GM12878 (cell line): ENCODE measurements at regions of chr18 and their contacts with region 1.

Region 1: DNA sequence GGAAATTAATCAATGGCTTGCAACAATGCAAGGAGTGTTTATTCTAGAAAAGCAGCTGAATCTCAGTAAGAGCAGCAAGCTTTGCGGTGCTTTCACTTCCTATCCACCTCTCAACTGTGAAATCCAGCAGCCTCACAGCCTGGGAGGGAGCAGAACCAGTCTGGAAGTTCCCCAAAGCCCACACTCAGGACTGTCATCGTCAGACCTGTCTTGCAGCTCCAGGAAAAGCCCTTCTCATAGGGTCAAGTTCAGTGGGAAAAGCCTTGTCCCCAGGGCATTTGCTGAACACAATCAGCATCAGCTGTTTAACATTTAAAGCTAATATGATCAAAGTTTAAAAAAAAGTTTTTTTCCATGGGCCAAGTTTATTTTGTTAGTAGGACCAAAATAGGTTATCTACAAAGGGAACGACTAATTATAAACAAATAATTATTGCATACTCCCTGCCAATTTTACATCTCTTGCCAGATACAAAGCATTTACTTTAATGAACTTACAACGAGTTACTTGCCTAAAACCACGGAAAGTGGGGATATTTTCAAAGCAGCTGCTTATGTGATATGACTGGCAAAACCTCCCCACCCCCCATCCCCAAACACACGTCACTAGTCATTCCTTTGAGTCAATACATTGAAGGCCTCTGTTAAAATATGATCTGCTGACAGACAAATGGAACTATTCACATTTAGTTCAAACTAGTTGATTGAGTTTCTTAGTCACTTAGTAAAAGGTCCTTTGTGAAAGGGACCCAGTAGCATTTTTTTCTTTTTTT is 36.8 kb downstream of the PARD6G start:
- DNase-seq: no peak
- ATAC-seq: peak; percentile 85
- H3K4me3 ChIP-seq: no peak overlapping the region
- H3K27ac ChIP-seq: no peak overlapping the region
- H3K4me1 ChIP-seq: peaks cover 13% of the 10 kb centered on the region; the same call in 1 of the 2 replicates
- H3K27me3 ChIP-seq: no peaks in the 10 kb centered on the region
- CTCF ChIP-seq: no peak
- EP300 ChIP-seq: peak; percentile 13 to 61; a peak in 1 of 4 replicates
- POLR2A ChIP-seq: no peak
- RAD21 ChIP-seq: no peak

Region 2: GRCh38 chr18:80194874-80195570 is 15.5 kb before region 1 on chr18:
- CTCF ChIA-PET with region 1: interaction called, 21 read pairs
- POLR2A ChIA-PET with region 1: interaction called, 4 read pairs
- RAD21 ChIA-PET with region 1: interaction called, 7 read pairs
- SMC1A ChIA-PET with region 1: interaction called, 16 read pairs
- in situ Hi-C with region 1: no loop called
- intact Hi-C with region 1: no loop called
- DNase-seq: peak; percentile 48
- ATAC-seq: peak; percentile 89
- H3K4me3 ChIP-seq: no peak overlapping the region
- H3K27ac ChIP-seq: no peak overlapping the region
- H3K4me1 ChIP-seq: no peaks in the 10 kb centered on the region
- H3K27me3 ChIP-seq: peaks cover 0 to 2% of the 10 kb centered on the region in 2 experiments; a peak in 1 of 4 replicates
- CTCF ChIP-seq: no peak
- EP300 ChIP-seq: no peak
- POLR2A ChIP-seq: no peak
- RAD21 ChIP-seq: no peak

Region 3: GRCh38 chr18:80200171-80200931 is 10.1 kb before region 1 on chr18:
- CTCF ChIA-PET with region 1: interaction called, 21 read pairs
- POLR2A ChIA-PET with region 1: interaction called, 10 read pairs
- RAD21 ChIA-PET with region 1: interaction called, 7 read pairs
- SMC1A ChIA-PET with region 1: interaction called, 16 read pairs
- in situ Hi-C with region 1: no loop called
- intact Hi-C with region 1: no loop called
- DNase-seq: no peak
- ATAC-seq: no peak
- H3K4me3 ChIP-seq: no peak overlapping the region
- H3K27ac ChIP-seq: no peak overlapping the region
- H3K4me1 ChIP-seq: peaks cover 27% of the 10 kb centered on the region
- H3K27me3 ChIP-seq: no peaks in the 10 kb centered on the region
- CTCF ChIP-seq: peak in 1 of 3 experiments; percentile 41; a peak in 1 of 6 replicates
- EP300 ChIP-seq: no peak
- POLR2A ChIP-seq: no peak
- RAD21 ChIP-seq: peak; percentile 63

Region 4: GRCh38 chr18:80223581-80224148 is 13.2 kb after region 1 on chr18:
- CTCF ChIA-PET with region 1: interaction called, 7 read pairs
- POLR2A ChIA-PET with region 1: interaction called, 4 read pairs
- RAD21 ChIA-PET with region 1: interaction called, 6 read pairs
- SMC1A ChIA-PET with region 1: interaction called, 14 read pairs
- in situ Hi-C with region 1: no loop called
- intact Hi-C with region 1: no loop called
- DNase-seq: no peak
- ATAC-seq: no peak
- H3K4me3 ChIP-seq: no peak overlapping the region
- H3K27ac ChIP-seq: no peak overlapping the region
- H3K4me1 ChIP-seq: no peaks in the 10 kb centered on the region
- H3K27me3 ChIP-seq: peaks cover 0 to 6% of the 10 kb centered on the region in 2 experiments; a peak in 1 of 4 replicates
- CTCF ChIP-seq: no peak
- EP300 ChIP-seq: no peak
- POLR2A ChIP-seq: no peak
- RAD21 ChIP-seq: no peak